Esophagus squamous epithelium (tissue), 5 donors: ENCODE measurements at regions of chr2 and their contacts with region 1.

Region 1: GRCh38 chr2:181742922-181743722 is 62.8 kb upstream of the NEUROD1 start:
- DNase-seq: no peak
- H3K4me3 ChIP-seq: no peak overlapping the region
- H3K27ac ChIP-seq: no peak overlapping the region
- H3K4me1 ChIP-seq: peaks cover 0 to 9% (median 2%) of the 10 kb centered on the region in 3 donors
- H3K27me3 ChIP-seq: no peaks in the 10 kb centered on the region
- CTCF ChIP-seq: peak; percentile 45 to 71 (median 56)
- POLR2A ChIP-seq: no peak

Region 2: GRCh38 chr2:181907057-181907456 is 163.9 kb after region 1 on chr2:
- intact Hi-C with region 1: loop called (anchors 5 kb)
- DNase-seq: no peak
- H3K4me3 ChIP-seq: no peak overlapping the region
- H3K27ac ChIP-seq: no peak overlapping the region
- H3K4me1 ChIP-seq: peaks cover 0 to 33% (median 0%) of the 10 kb centered on the region in 3 donors
- H3K27me3 ChIP-seq: no peaks in the 10 kb centered on the region
- CTCF ChIP-seq: no peak
- POLR2A ChIP-seq: no peak

Region 3: GRCh38 chr2:182077451-182078142 is 334.5 kb after region 1 on chr2:
- intact Hi-C with region 1: loop called (anchors 5 kb)
- DNase-seq: no peak
- H3K4me3 ChIP-seq: no peak overlapping the region
- H3K27ac ChIP-seq: peak overlapping the region in 2 of 4 donors; percentile 23 to 34
- H3K4me1 ChIP-seq: peaks cover 0 to 15% (median 5%) of the 10 kb centered on the region in 3 donors
- H3K27me3 ChIP-seq: peaks cover 0 to 3% (median 0%) of the 10 kb centered on the region in 4 donors
- CTCF ChIP-seq: peak in 5 of 6 experiments; percentile 61 to 70 (median 69)
- POLR2A ChIP-seq: no peak